ENCODE measurements at regions of chr9 and their contacts with region 1.

Region 1: DNA sequence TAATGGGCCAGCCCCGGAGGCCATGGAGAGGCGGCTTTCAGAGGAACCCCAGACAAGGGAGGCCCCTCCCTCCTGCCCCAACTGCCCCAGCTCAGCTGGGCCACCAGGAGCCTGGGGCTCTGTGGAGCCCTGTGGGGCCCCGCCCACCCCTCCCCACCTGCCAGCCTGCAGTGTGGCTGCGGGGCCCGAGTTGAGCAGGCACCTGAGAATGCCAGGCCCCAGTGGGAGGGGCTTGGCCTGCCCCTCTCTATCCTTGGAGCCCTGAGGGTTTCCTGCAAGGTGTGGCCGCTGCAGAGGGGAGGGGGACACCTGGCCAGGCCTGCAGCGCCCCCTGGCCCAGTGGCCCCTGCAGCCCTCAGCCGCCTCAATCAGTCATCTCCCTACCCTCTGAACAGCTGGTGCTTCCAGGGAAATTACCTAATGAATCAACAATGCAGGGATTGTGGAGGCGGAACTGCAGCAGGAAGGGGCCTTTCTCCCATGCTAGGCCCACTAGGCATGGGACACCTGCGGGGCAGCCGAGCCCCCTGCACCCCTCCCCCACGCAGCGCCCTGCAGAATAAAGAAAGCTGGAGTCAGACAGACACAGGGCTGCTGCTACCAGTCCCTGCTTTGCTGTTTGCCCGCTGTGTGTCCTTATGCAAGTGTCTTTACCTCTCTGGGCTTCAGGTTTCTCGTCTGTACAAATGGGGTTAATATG is 47.9 kb downstream of the LMX1B start:
- DNase-seq: peak; percentile 80
- ATAC-seq: peak; percentile 82
- H3K4me3 Mint-ChIP-seq: no peak overlapping the region
- H3K27ac Mint-ChIP-seq: peak overlapping the region; percentile 7; the same call in 1 of the 2 replicates
- H3K4me1 Mint-ChIP-seq: peaks cover 43% of the 10 kb centered on the region
- H3K27me3 Mint-ChIP-seq: peaks cover 18% of the 10 kb centered on the region
- CTCF ChIP-seq: no peak

Region 2: DNA sequence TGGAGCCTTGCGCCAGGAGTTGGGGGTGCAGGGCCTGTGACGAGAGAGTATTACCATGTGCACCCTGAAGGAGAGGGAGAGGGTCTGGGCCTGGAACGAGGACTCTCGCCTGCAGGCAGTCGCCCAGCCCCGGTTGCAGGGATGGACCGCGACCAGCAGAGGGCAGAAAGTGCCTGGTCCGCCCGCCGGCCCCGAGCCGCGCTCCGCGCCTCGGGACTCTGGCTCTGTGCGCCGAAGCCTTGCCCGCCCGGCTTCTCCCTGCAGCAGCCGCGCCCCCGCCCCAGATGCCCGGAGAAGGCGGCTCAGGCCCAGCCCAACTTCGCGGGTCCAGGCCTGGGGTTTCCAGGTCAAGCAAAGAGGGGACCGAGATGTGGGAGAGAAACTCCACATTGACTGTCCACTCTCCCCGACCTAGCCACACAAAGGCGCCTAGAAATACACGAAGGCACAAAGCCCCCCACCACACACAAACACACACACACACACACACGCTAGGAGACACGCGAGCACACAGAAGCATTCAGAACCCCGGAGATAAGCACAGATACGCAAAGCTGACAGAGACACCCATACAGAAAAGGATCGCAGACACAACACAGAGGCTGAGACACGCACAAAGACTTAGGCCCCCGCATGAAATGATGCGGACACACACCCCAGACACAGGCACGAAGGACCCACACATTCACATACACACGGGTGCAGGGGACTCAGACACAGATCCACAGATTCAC is 49.9 kb before region 1 on chr9:
- CTCF ChIA-PET with region 1: interaction called, 13 read pairs
- POLR2A ChIA-PET with region 1: no interaction called
- DNase-seq: peak; percentile 94
- ATAC-seq: peak; percentile 64
- H3K4me3 Mint-ChIP-seq: peak overlapping the region; percentile 58
- H3K27ac Mint-ChIP-seq: no peak overlapping the region
- H3K4me1 Mint-ChIP-seq: peaks cover 32% of the 10 kb centered on the region
- H3K27me3 Mint-ChIP-seq: peaks cover 94% of the 10 kb centered on the region
- CTCF ChIP-seq: peak; percentile 81

Region 3: GRCh38 chr9:126626127-126626925 is 35.3 kb before region 1 on chr9:
- CTCF ChIA-PET with region 1: interaction called, 18 read pairs
- POLR2A ChIA-PET with region 1: interaction called, 4 read pairs
- DNase-seq: peak; percentile 55
- ATAC-seq: peak; percentile 11
- H3K4me3 Mint-ChIP-seq: peak overlapping the region; percentile 72
- H3K27ac Mint-ChIP-seq: no peak overlapping the region
- H3K4me1 Mint-ChIP-seq: peaks cover 54% of the 10 kb centered on the region
- H3K27me3 Mint-ChIP-seq: peaks cover 100% of the 10 kb centered on the region
- CTCF ChIP-seq: no peak

Region 4: DNA sequence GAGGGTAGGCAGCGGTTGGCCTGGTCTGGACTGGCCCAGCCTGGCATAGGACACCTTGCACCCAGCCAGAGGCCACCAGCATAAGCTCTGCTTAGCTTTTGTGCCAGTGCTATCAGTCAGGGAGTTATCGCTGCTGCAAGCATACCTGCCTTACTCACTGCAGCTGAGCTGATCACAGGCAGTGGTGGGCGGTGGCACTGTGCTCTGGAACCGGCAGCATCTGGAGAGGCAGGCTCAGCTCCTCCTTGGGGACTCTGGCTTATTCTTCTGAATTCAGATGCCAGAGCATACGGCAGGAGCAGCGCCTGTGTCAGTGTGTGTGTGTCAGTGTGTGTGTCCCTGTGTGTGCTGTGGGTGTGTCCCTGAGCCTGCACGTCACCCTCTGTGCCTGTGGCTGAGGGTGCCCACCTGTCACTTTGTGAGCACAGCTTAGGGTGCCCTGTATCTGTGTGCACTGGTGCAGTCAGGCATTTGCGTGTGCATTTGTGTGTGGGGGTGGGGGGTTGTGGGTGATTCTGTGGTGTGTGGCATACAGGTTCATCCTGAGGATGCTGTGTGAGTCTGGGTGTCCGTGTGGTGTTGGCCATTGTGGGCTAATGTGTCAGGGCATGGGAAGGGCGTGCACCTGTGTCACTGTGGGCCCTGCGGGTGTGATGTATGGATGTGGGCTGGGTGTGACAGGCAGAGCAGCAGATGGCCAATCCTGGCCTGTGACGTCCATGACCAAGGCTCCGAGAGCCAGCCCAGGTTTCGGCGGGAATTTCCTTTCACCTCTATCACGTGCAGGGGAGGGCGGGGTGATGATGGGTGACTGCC is 24.5 kb before region 1 on chr9:
- CTCF ChIA-PET with region 1: interaction called, 18 read pairs
- POLR2A ChIA-PET with region 1: no interaction called
- DNase-seq: no peak
- ATAC-seq: no peak
- H3K4me3 Mint-ChIP-seq: peak overlapping the region; percentile 31; the same call in 1 of the 2 replicates
- H3K27ac Mint-ChIP-seq: no peak overlapping the region
- H3K4me1 Mint-ChIP-seq: peaks cover 26% of the 10 kb centered on the region
- H3K27me3 Mint-ChIP-seq: peaks cover 98% of the 10 kb centered on the region
- CTCF ChIP-seq: no peak

Region 5: DNA sequence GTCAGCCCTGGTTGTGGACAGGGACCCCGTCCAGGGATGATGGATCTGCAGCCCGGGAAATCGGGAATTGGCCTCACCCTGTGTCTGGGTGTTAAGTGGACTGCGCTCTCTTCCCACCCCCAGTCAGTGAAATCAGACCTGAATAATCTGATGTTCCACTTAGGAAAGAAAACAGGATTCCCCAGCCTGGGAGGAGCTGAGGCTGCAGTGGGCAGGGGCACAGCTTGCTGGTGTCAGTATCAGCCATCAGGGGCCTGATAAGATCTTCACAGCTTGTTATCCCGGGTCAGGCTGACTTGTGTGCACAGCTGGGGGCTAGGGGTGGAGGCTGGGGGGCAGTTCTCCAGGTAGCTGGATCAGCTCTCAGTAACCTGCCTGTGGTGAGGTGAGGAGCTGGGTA is 18.8 kb before region 1 on chr9:
- CTCF ChIA-PET with region 1: interaction called, 17 read pairs
- POLR2A ChIA-PET with region 1: no interaction called
- DNase-seq: no peak
- ATAC-seq: no peak
- H3K4me3 Mint-ChIP-seq: no peak overlapping the region
- H3K27ac Mint-ChIP-seq: no peak overlapping the region
- H3K4me1 Mint-ChIP-seq: peaks cover 33% of the 10 kb centered on the region
- H3K27me3 Mint-ChIP-seq: peaks cover 60% of the 10 kb centered on the region
- CTCF ChIP-seq: no peak

Region 6: DNA sequence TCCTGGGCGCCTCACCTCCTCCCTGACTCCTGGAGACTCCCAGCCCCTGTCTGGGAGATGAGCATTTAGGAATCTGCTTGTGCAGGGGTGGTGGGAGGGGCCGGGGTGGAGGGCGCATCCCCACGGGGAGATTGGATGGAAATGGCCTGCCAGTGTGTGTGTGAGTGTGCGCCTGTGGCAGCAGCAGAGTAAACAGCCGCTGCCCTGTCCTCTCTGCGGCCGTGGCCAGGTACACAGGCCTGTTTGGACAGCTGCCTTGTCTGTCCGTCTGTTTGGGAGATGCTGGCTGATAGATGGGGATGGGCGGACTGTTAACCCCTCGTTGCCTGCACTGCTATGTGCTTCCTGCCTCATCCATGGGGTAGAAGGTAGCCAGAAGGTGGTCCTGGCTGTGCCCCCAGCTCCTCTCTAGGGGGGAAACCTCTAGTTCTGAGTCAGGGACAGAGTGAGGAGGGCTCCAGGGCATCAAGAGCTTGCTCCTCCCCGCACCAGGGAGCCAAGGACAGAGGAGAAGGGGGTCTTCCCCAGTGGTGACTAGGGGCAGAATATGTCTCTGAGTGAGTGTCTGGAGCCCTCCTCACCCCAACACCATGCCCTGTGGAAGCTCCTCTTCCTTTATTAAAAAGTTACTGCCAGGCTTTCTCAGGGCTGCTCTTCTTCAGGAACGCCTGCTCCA is 12.2 kb after region 1 on chr9:
- CTCF ChIA-PET with region 1: interaction called, 36 read pairs
- POLR2A ChIA-PET with region 1: interaction called, 3 read pairs
- DNase-seq: peak; percentile 50
- ATAC-seq: no peak
- H3K4me3 Mint-ChIP-seq: peak overlapping the region; percentile 24; the same call in 1 of the 2 replicates
- H3K27ac Mint-ChIP-seq: no peak overlapping the region
- H3K4me1 Mint-ChIP-seq: peaks cover 49% of the 10 kb centered on the region
- H3K27me3 Mint-ChIP-seq: peaks cover 70% of the 10 kb centered on the region
- CTCF ChIP-seq: no peak

Measured in WTC11 (cell line).